ENCODE measurements at regions of chr5 and their contacts with region 1.

Region 1: GRCh38 chr5:31218978-31219377 is 25.5 kb downstream of the CDH6 start:
- DNase-seq: no peak
- ATAC-seq: no peak
- H3K4me3 ChIP-seq: no peak overlapping the region
- H3K27ac ChIP-seq: no peak overlapping the region
- H3K4me1 ChIP-seq: peaks cover 8% of the 10 kb centered on the region; the same call in 1 of the 2 replicates
- H3K27me3 ChIP-seq: no peaks in the 10 kb centered on the region
- CTCF ChIP-seq: no peak
- POLR2A ChIP-seq: no peak
- RAD21 ChIP-seq: no peak

Region 2: GRCh38 chr5:31291323-31291852 is 72.4 kb after region 1 on chr5:
- CTCF ChIA-PET with region 1: no interaction called
- POLR2A ChIA-PET with region 1: no interaction called
- dilution Hi-C with region 1: no loop called
- in situ Hi-C with region 1: no loop called
- intact Hi-C with region 1: loop called (anchors 2 kb)
- DNase-seq: no peak
- ATAC-seq: no peak
- H3K4me3 ChIP-seq: no peak overlapping the region
- H3K27ac ChIP-seq: no peak overlapping the region
- H3K4me1 ChIP-seq: peaks cover 1% of the 10 kb centered on the region; the same call in 1 of the 2 replicates
- H3K27me3 ChIP-seq: no peaks in the 10 kb centered on the region
- CTCF ChIP-seq: no peak
- POLR2A ChIP-seq: no peak
- RAD21 ChIP-seq: no peak

Measured in IMR-90 (cell line).